Naive thymus-derived CD4-positive, alpha-beta T cell (primary cell): ENCODE measurements at regions of chr17 and their contacts with region 1.

Region 1: DNA sequence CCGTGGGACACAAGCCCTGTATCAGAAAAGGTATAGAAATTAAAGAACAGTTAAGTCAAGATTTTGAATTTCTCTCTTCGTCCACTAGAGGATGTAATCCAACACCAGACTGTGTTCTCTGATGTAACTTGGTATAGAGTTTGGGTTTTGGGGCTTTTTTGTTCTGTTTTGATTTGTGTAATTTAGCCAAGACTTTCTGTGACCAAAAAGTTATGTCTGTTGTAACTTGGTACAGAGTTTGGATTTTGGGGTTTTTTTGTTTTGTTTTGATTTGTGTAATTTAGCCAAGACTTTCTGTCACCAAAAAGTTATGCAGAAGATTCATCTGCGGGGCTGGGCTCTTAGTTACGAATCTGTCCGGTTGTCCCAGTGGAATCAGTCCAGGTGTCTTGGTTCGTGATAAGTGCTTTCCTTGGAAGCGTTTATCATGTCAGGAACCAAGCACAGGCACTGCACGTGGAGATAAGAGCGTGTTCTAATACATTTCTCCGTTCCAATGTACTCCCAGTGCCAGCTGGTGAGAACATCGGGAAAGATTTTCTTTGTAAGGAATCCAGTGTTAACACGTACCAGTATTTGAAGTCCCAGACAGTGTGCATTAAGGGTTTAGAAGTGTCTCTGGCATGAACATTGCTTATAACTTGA is 44.1 kb upstream of the SEC14L1 start:
- DNase-seq: peak in 5 of 9 donors; percentile 25 to 52 (median 33)
- ATAC-seq: peak; percentile 57
- H3K4me3 ChIP-seq: no peak overlapping the region
- H3K4me3 Mint-ChIP-seq: peak overlapping the region in 1 of 10 donors; percentile 16
- H3K27ac ChIP-seq: no peak overlapping the region
- H3K27ac Mint-ChIP-seq: peak overlapping the region; percentile 40 to 96 (median 85)
- H3K4me1 ChIP-seq: peaks cover 0 to 21% of the 10 kb centered on the region in 2 donors
- H3K4me1 Mint-ChIP-seq: peaks cover 21 to 54% (median 46%) of the 10 kb centered on the region in 7 donors
- H3K27me3 ChIP-seq: no peaks in the 10 kb centered on the region
- H3K27me3 Mint-ChIP-seq: no peaks in the 10 kb centered on the region

Region 2: DNA sequence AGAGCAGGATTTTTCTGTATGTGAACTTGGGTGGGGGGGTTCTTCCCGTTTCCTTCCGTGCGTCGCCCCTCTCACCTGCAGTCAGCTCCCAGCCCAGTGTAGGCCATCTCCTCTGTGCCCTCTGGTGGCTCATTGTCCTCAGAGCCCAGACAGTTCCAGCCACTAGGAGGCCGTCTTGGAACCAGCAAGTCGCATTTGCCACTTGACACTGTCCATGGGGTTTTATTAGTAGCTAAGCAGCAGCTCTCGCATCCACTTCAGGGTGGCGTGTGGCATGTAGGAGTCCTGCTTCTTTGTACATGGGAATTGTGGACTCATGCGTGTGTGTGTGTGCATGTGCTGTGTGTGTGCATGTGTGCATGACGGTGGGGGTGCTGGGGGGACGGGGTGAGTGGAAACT is 118.1 kb after region 1 on chr17:
- CTCF ChIA-PET with region 1: interaction called, 4 read pairs
- POLR2A ChIA-PET with region 1: no interaction called
- intact Hi-C with region 1: loop called in 1 of 2 experiments (anchors 1 kb)
- DNase-seq: peak in 4 of 9 donors; percentile 10 to 21 (median 15)
- ATAC-seq: peak; percentile 53
- H3K4me3 ChIP-seq: no peak overlapping the region
- H3K4me3 Mint-ChIP-seq: no peak overlapping the region
- H3K27ac ChIP-seq: no peak overlapping the region
- H3K27ac Mint-ChIP-seq: peak overlapping the region in 3 of 9 donors; percentile 2 to 65 (median 23)
- H3K4me1 ChIP-seq: no peaks in the 10 kb centered on the region
- H3K4me1 Mint-ChIP-seq: peaks cover 0 to 2% (median 0%) of the 10 kb centered on the region in 7 donors
- H3K27me3 ChIP-seq: no peaks in the 10 kb centered on the region
- H3K27me3 Mint-ChIP-seq: no peaks in the 10 kb centered on the region

Region 3: DNA sequence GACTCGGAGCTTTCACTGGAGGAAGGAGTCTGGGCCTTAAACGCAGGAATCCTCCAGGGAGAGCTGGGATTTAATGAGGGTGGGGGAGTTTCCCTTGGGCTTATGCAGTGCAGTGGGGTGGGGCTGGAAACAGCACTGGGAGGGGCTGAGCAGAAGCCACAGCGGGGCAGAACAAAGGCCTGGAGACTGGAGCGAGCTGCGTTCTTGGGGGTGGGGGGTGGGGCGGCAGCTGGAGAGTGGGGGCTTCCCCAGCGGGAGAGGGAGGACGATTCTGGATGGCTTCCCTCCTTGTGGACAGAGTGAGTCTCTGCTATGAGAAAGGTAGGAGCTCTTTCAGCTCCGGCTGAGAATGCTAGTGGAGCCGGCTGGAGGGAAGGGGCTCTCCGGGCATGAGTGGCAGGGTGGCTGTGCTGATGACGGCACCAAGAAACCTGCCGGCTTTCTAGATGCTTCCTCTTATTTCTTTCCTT is 450.1 kb after region 1 on chr17:
- CTCF ChIA-PET with region 1: no interaction called
- POLR2A ChIA-PET with region 1: no interaction called
- intact Hi-C with region 1: no loop called
- DNase-seq: no peak
- ATAC-seq: no peak
- H3K4me3 ChIP-seq: no peak overlapping the region
- H3K4me3 Mint-ChIP-seq: no peak overlapping the region
- H3K27ac ChIP-seq: no peak overlapping the region
- H3K27ac Mint-ChIP-seq: no peak overlapping the region
- H3K4me1 ChIP-seq: peaks cover 0 to 5% of the 10 kb centered on the region in 2 donors
- H3K4me1 Mint-ChIP-seq: peaks cover 0 to 7% (median 0%) of the 10 kb centered on the region in 7 donors
- H3K27me3 ChIP-seq: no peaks in the 10 kb centered on the region
- H3K27me3 Mint-ChIP-seq: peaks cover 0 to 17% (median 0%) of the 10 kb centered on the region in 5 donors